Astrocyte of the spinal cord (primary cell): ENCODE measurements at regions of chr3 and their contacts with region 1.

Region 1: GRCh38 chr3:194682694-194683310 is 2.9 kb upstream of the FAM43A start:
- DNase-seq: peak; percentile 88
- H3K4me3 ChIP-seq: no peak overlapping the region
- CTCF ChIP-seq: peak; percentile 93

Region 2: DNA sequence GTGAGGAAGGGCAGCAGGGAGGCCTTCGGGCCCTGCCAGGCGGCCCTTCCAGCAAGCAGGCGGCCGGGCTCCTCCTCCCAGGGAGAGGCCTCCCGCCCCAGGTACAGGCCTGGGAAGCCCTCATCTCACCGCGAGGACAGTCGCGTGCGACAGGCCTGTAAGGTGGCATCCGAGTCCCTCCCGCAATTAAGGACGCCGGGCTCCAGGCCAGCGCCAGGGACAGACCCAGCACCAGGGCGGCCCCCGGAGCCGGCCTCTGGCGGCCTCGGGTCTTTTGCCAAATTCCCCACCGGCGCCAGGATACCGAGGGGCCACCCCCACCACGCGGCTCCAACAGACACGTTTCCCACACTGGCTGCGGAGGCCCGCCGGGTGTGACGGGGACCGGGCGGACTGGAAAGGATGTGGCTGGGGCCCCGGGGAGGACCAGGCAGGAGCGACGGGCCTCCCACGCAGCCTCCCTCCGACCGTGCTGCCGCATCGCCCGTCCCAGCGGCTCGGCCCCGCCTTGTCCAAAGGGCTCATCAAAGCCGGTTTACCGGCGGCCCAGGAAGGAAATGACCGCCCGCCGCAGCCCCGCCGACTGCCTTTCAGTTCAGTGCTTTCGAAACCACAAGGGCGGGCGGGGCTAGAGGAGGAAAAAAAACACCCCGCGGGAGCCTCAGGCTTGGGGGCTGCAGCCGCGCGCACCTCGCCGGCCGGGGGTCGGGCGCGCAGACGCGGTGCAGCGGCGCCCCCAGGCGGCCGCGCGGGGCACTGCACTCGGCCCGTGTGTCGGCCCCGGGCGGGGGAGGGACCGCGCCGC is 576.9 kb after region 1 on chr3:
- in situ Hi-C with region 1: loop called (anchors 10 kb)
- DNase-seq: peak; percentile 97
- H3K4me3 ChIP-seq: peak overlapping the region; percentile 59
- CTCF ChIP-seq: peak; percentile 39